B cell (primary cell): ENCODE measurements at regions of chr19 and their contacts with region 1.

Region 1: GRCh38 chr19:1020868-1021425 is at the start of gene TMEM259:
- DNase-seq: peak; percentile 99
- ATAC-seq: peak; percentile 87
- H3K4me3 ChIP-seq: peak within 1 kb of the TSS; percentile 62 to 94 (median 87)
- H3K4me3 Mint-ChIP-seq: peak within 1 kb of the TSS; percentile 89
- H3K27ac ChIP-seq: peak within 1 kb of the TSS; percentile 98 to 99
- H3K27ac Mint-ChIP-seq: peak within 1 kb of the TSS; percentile 100
- H3K4me1 ChIP-seq: peaks cover 42 to 60% of the 10 kb centered on the region in 2 donors
- H3K4me1 Mint-ChIP-seq: peaks cover 45% of the 10 kb centered on the region
- H3K27me3 ChIP-seq: no peaks in the 10 kb centered on the region
- H3K27me3 Mint-ChIP-seq: no peaks in the 10 kb centered on the region
- CTCF ChIP-seq: no peak
- total RNA-seq, gene TMEM259: 373 and 377 TPM in 2 replicates

Region 2: DNA sequence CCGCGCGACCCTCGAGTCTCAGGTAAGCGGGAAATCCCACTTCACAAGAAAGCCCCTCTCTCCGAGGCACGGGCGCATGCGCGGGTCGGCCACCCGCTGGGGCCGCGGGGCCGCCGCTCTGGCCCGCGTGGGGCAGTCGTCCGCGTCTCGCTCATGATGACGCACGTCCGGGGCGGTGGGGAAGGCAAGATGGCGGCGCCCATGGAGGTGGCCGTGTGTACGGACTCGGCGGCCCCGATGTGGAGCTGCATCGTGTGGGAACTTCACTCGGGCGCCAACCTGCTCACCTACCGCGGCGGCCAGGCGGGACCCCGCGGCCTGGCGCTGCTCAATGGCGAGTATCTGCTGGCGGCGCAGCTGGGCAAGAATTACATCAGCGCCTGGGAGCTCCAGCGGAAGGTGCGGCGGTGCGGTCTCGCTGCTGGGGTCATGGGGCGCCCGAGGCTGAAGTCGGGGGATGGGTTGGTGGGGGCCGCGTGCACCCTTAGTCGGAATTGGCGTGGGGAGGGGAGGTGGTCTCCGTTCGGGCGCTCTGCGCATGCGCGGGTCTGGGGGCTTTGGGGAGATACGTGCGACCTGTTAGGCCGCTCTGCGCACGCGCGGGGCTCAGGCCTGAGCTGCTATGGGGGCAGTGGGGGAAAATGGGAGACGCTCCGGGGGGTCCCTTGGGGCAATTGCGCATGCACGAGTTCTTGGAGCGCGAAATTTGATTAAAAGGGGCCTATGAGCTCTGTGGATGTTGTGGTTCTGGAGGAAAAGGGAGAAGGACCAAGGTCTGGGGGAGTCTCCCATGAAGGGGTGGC is 36.6 kb before region 1 on chr19 and contains the start of gene WDR18:
- CTCF ChIA-PET with region 1: interaction called, 3 read pairs
- POLR2A ChIA-PET with region 1: interaction called, 6 read pairs
- intact Hi-C with region 1: loop called (anchors 1 kb)
- DNase-seq: peak; percentile 94
- ATAC-seq: peak; percentile 90
- H3K4me3 ChIP-seq: peak within 1 kb of the TSS; percentile 40 to 99 (median 88)
- H3K4me3 Mint-ChIP-seq: peak within 1 kb of the TSS; percentile 95
- H3K27ac ChIP-seq: peak within 1 kb of the TSS; percentile 88 to 90
- H3K27ac Mint-ChIP-seq: peak within 1 kb of the TSS; percentile 93
- H3K4me1 ChIP-seq: peaks cover 19 to 27% of the 10 kb centered on the region in 2 donors
- H3K4me1 Mint-ChIP-seq: peaks cover 16% of the 10 kb centered on the region
- H3K27me3 ChIP-seq: no peaks in the 10 kb centered on the region
- H3K27me3 Mint-ChIP-seq: no peaks in the 10 kb centered on the region
- CTCF ChIP-seq: no peak
- total RNA-seq, gene WDR18: 50.5 and 60.5 TPM in 2 replicates

Region 3: GRCh38 chr19:1064661-1065605 is 44.0 kb after region 1 on chr19:
- CTCF ChIA-PET with region 1: interaction called, 11 read pairs
- POLR2A ChIA-PET with region 1: interaction called, 12 read pairs
- intact Hi-C with region 1: loop called (anchors 1 kb)
- DNase-seq: peak; percentile 83
- ATAC-seq: peak; percentile 19
- H3K4me3 ChIP-seq: no peak overlapping the region
- H3K4me3 Mint-ChIP-seq: peak overlapping the region; percentile 79
- H3K27ac ChIP-seq: no peak overlapping the region
- H3K27ac Mint-ChIP-seq: peak overlapping the region; percentile 83
- H3K4me1 ChIP-seq: peaks cover 38 to 53% of the 10 kb centered on the region in 2 donors
- H3K4me1 Mint-ChIP-seq: peaks cover 33% of the 10 kb centered on the region
- H3K27me3 ChIP-seq: no peaks in the 10 kb centered on the region
- H3K27me3 Mint-ChIP-seq: no peaks in the 10 kb centered on the region
- CTCF ChIP-seq: peak; percentile 78

Region 4: GRCh38 chr19:1094975-1095701 is 74.2 kb after region 1 on chr19 and contains the start of gene POLR2E:
- CTCF ChIA-PET with region 1: no interaction called
- POLR2A ChIA-PET with region 1: no interaction called
- intact Hi-C with region 1: loop called (anchors 2 kb)
- DNase-seq: peak; percentile 99
- ATAC-seq: peak; percentile 99
- H3K4me3 ChIP-seq: peak within 1 kb of the TSS; percentile 56 to 86 (median 74)
- H3K4me3 Mint-ChIP-seq: peak within 1 kb of the TSS; percentile 97
- H3K27ac ChIP-seq: peak within 1 kb of the TSS; percentile 27 to 70
- H3K27ac Mint-ChIP-seq: peak within 1 kb of the TSS; percentile 95
- H3K4me1 ChIP-seq: peaks cover 19 to 23% of the 10 kb centered on the region in 2 donors
- H3K4me1 Mint-ChIP-seq: peaks cover 35% of the 10 kb centered on the region
- H3K27me3 ChIP-seq: no peaks in the 10 kb centered on the region
- H3K27me3 Mint-ChIP-seq: no peaks in the 10 kb centered on the region
- CTCF ChIP-seq: no peak
- total RNA-seq, gene POLR2E: 103 and 106 TPM in 2 replicates

Region 5: GRCh38 chr19:2084993-2085720 is 1064.2 kb after region 1 on chr19:
- CTCF ChIA-PET with region 1: no interaction called
- POLR2A ChIA-PET with region 1: interaction called, 11 read pairs
- intact Hi-C with region 1: no loop called
- DNase-seq: peak; percentile 97
- ATAC-seq: peak; percentile 29
- H3K4me3 ChIP-seq: peak overlapping the region; percentile 87 to 100 (median 98)
- H3K4me3 Mint-ChIP-seq: peak overlapping the region; percentile 92
- H3K27ac ChIP-seq: peak overlapping the region; percentile 96 to 99
- H3K27ac Mint-ChIP-seq: peak overlapping the region; percentile 99
- H3K4me1 ChIP-seq: peaks cover 74 to 81% of the 10 kb centered on the region in 2 donors
- H3K4me1 Mint-ChIP-seq: peaks cover 79% of the 10 kb centered on the region
- H3K27me3 ChIP-seq: no peaks in the 10 kb centered on the region
- H3K27me3 Mint-ChIP-seq: no peaks in the 10 kb centered on the region
- CTCF ChIP-seq: no peak